Heart left ventricle (tissue), 16 donors: ENCODE measurements at regions of chr9 and their contacts with region 1.

Region 1: DNA sequence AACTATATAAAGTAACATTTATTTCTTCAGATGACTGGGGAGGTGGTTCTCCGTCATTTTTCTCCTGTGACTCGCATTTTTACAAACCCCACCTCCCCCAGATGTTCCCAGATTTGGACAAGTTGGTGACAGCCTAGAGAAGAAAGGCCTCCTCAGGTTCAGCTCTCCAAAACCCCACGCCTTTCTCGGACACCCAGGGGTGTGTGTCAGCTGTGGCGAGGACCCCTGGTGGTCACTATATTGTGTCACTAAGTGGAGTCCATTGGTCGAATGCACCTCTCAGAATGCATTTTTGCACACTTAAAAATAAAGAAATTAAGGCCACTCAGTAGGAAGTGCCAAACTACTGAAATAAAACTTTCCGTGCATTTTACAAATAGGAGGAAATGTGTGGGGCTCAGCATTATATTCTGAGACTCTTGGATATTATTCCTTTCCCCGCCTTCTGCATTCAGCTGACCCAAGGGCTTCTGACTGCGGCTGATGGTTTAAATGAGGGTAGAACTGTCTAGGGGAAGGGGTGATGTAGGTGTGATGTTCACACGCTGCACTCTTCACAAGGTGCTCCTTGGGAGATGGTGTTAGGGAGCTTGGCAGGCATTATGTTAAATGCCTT is 47.6 kb downstream of the ACO1 start:
- DNase-seq: peak in 4 of 5 donors; percentile 36 to 49 (median 38)
- ATAC-seq: peak in 2 of 4 donors; percentile 51 to 59
- H3K4me3 ChIP-seq: no peak overlapping the region
- H3K27ac ChIP-seq: no peak overlapping the region
- H3K4me1 ChIP-seq: peaks cover 0 to 3% (median 0%) of the 10 kb centered on the region in 12 donors
- H3K27me3 ChIP-seq: no peaks in the 10 kb centered on the region
- CTCF ChIP-seq: peak; percentile 40 to 64 (median 50)
- POLR2A ChIP-seq: no peak

Region 2: GRCh38 chr9:32378993-32379729 is 52.9 kb before region 1 on chr9:
- intact Hi-C with region 1: loop called in 9 of 10 experiments (anchors 1 to 5 kb)
- DNase-seq: peak in 2 of 5 donors; percentile 22 to 40
- ATAC-seq: peak; percentile 65 to 89 (median 86)
- H3K4me3 ChIP-seq: no peak overlapping the region
- H3K27ac ChIP-seq: no peak overlapping the region
- H3K4me1 ChIP-seq: peaks cover 0 to 18% (median 2%) of the 10 kb centered on the region in 12 donors
- H3K27me3 ChIP-seq: peaks cover 0 to 4% (median 0%) of the 10 kb centered on the region in 9 donors
- CTCF ChIP-seq: peak; percentile 62 to 87 (median 77)
- POLR2A ChIP-seq: no peak

Region 3: DNA sequence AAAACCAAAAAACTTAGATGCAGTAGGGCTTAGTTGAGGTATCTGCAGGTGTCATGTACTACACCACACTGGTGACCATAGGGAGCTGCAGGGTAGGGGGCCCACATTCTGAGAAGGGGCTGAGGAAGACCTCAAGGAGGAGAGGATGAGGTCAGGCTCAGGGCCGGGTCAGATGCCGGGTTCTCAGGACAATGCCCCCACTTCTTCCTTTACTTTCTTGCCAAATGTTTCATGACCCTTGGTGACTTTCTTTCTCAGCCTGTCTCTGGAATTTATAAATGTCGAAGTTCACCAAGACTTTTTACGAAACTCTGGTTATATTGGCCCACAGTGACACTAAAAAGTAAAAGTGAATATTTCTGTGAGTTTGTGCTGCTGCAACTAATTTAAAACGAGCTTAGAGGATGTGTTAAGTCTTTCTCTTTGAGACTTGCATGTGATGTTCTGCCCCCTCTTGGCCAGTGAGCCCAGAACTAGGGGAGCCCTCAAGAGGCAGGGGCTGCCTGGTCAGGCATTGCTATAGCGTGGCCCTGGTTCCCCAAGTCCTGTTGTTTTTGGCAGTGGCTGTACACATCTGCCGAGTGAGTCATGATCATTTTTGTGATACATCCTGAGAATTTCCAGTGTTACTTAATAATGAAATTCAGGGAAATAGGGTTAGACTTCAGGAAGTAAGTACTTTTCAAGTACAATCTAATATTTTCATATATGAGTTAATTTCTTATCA is 36.4 kb before region 1 on chr9:
- intact Hi-C with region 1: loop called in 1 of 10 experiments (anchors 5 kb)
- DNase-seq: peak; percentile 39 to 73 (median 63)
- ATAC-seq: peak in 3 of 4 donors; percentile 89 to 95 (median 93)
- H3K4me3 ChIP-seq: no peak overlapping the region
- H3K27ac ChIP-seq: peak overlapping the region in 9 of 12 donors; percentile 28 to 76 (median 46)
- H3K4me1 ChIP-seq: peaks cover 0 to 22% (median 11%) of the 10 kb centered on the region in 12 donors
- H3K27me3 ChIP-seq: no peaks in the 10 kb centered on the region
- CTCF ChIP-seq: peak in 5 of 12 donors; percentile 14 to 42 (median 31)
- POLR2A ChIP-seq: no peak

Region 4: GRCh38 chr9:32533336-32533735 is 101.3 kb after region 1 on chr9:
- intact Hi-C with region 1: no loop called
- DNase-seq: no peak
- ATAC-seq: no peak
- H3K4me3 ChIP-seq: no peak overlapping the region
- H3K27ac ChIP-seq: no peak overlapping the region
- H3K4me1 ChIP-seq: no peaks in the 10 kb centered on the region
- H3K27me3 ChIP-seq: no peaks in the 10 kb centered on the region
- CTCF ChIP-seq: no peak
- POLR2A ChIP-seq: no peak

Region 5: DNA sequence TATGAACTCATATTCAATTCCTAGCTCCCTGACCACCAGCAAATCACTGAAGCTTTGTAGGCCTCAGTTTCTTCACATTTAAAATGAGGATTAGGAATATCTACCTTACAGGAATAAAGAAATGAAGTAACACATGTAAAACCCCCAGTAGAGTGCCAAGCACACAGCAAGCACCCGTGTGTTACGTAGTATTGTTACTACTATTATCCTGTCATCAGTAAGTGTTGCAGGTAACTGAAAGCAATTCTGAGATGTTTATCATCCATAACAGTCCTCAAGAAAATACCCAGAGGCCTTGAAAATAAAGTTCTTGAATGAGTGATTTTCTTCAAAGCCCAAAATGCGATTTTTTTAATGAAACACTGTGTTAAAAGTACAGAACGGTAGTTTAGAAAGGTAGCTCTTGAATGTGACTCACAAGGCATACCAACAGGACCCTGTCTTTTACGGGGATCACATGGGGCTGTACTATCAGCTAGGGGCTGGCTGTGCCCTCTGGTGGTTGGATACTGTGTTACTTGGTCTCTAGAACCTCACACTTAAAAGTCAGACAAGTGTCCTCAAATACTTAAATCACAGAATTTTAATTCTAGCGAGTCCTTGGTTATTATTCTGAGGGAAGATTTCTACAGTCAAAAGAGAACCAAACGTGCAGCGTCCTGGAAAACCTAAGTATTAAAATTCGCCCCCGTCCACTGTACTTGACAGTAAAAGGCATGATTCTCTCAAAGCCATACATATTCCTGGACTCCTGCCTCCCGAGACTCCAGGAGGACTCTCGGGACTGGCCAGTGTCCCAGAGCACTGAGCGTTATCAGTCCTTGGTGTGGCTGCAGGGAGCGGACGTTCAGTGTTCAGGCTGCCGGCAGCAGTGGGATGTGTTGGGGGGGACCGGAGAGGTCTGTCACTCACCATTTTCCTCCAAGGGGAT is 140.2 kb after region 1 on chr9:
- intact Hi-C with region 1: loop called in 3 of 10 experiments (anchors 5 to 10 kb)
- DNase-seq: peak in 4 of 5 donors; percentile 46 to 79 (median 58)
- ATAC-seq: peak; percentile 83 to 89 (median 86)
- H3K4me3 ChIP-seq: peak overlapping the region; percentile 71 to 96 (median 80)
- H3K27ac ChIP-seq: peak overlapping the region; percentile 79 to 98 (median 92)
- H3K4me1 ChIP-seq: peaks cover 0 to 35% (median 21%) of the 10 kb centered on the region in 12 donors
- H3K27me3 ChIP-seq: no peaks in the 10 kb centered on the region
- CTCF ChIP-seq: peak; percentile 13 to 66 (median 49)
- POLR2A ChIP-seq: no peak

Region 6: GRCh38 chr9:32579706-32580331 is 147.8 kb after region 1 on chr9:
- intact Hi-C with region 1: loop called in 2 of 10 experiments (anchors 5 to 10 kb)
- DNase-seq: peak; percentile 36 to 79 (median 54)
- ATAC-seq: peak in 1 of 4 donors; percentile 56
- H3K4me3 ChIP-seq: peak overlapping the region in 2 of 12 donors; percentile 1 to 16
- H3K27ac ChIP-seq: no peak overlapping the region
- H3K4me1 ChIP-seq: peaks cover 0 to 4% (median 0%) of the 10 kb centered on the region in 12 donors
- H3K27me3 ChIP-seq: peaks cover 0 to 10% (median 0%) of the 10 kb centered on the region in 9 donors
- CTCF ChIP-seq: peak; percentile 88 to 97 (median 94)
- POLR2A ChIP-seq: no peak